ENCODE measurements at regions of chr14 and their contacts with region 1.

Region 1: DNA sequence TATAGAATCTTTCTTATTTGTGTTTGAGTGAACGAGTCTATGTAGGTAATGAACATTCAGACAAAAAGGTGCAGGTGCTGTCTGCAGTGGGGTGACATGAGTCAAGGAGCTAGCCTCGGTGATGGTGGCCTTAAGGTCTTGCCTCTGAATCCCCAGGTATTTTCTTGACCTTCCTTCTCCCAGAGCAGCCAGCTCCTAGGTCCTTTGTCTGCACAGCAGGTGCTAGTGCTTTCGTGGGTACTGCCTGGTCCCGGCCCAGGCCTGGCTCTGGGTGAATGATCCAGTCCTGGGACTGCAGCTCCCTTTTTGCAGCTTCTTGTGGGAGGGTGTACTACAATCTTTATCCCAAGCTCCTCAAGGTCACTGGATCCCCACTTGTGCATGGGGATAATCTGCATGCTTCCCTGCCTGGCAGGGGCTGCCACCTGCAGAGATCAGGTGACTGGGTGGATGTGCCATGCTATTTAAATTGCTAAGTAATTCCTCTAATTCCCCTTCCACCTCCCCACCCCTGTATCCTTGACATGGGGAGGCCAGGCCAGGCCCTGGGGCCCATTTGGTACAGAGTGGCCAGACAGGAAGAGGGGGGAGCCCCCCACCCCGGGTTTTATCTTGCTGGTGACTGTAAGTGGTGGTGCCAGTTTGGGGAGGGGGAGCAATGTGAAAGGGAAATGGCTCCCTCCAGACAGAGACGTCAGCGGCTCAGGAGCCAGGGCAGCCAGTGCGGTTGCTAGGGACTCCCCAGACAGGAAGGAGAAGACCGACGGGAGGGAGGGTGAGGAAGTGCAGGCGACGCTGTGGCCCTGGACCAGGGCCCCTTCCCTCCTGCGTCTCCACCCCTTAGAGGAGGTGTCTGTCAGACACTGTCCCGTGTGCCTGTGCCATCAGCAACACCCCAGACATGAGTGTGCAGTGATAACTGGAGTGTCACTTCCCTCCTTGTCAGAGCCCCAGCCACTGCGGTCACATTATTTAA is 6.7 kb downstream of the VASH1 start:
- DNase-seq: peak; percentile 46 to 85 (median 70)
- H3K4me3 ChIP-seq: peak overlapping the region; percentile 17
- H3K4me3 Mint-ChIP-seq: peak overlapping the region in 6 of 7 donors; percentile 35 to 85 (median 60)
- H3K27ac ChIP-seq: peak overlapping the region; percentile 47
- H3K27ac Mint-ChIP-seq: peak overlapping the region in 7 of 8 donors; percentile 34 to 94 (median 89)
- H3K4me1 ChIP-seq: peaks cover 19% of the 10 kb centered on the region
- H3K4me1 Mint-ChIP-seq: peaks cover 17 to 37% (median 28%) of the 10 kb centered on the region in 3 donors
- H3K27me3 ChIP-seq: no peaks in the 10 kb centered on the region
- H3K27me3 Mint-ChIP-seq: peaks cover 10 to 12% of the 10 kb centered on the region in 2 donors

Region 2: GRCh38 chr14:76615331-76615730 is 152.6 kb before region 1 on chr14:
- CTCF ChIA-PET with region 1: no interaction called
- POLR2A ChIA-PET with region 1: no interaction called
- DNase-seq: no peak
- H3K4me3 ChIP-seq: no peak overlapping the region
- H3K4me3 Mint-ChIP-seq: no peak overlapping the region
- H3K27ac ChIP-seq: no peak overlapping the region
- H3K27ac Mint-ChIP-seq: no peak overlapping the region
- H3K4me1 ChIP-seq: no peaks in the 10 kb centered on the region
- H3K4me1 Mint-ChIP-seq: no peaks in the 10 kb centered on the region
- H3K27me3 ChIP-seq: no peaks in the 10 kb centered on the region
- H3K27me3 Mint-ChIP-seq: peaks cover 4 to 15% of the 10 kb centered on the region in 2 donors

Region 3: GRCh38 chr14:76752744-76753143 is 15.2 kb before region 1 on chr14:
- CTCF ChIA-PET with region 1: no interaction called
- POLR2A ChIA-PET with region 1: no interaction called
- DNase-seq: no peak
- H3K4me3 ChIP-seq: no peak overlapping the region
- H3K4me3 Mint-ChIP-seq: no peak overlapping the region
- H3K27ac ChIP-seq: no peak overlapping the region
- H3K27ac Mint-ChIP-seq: no peak overlapping the region
- H3K4me1 ChIP-seq: no peaks in the 10 kb centered on the region
- H3K4me1 Mint-ChIP-seq: no peaks in the 10 kb centered on the region
- H3K27me3 ChIP-seq: no peaks in the 10 kb centered on the region
- H3K27me3 Mint-ChIP-seq: peaks cover 5 to 14% of the 10 kb centered on the region in 2 donors

Region 4: DNA sequence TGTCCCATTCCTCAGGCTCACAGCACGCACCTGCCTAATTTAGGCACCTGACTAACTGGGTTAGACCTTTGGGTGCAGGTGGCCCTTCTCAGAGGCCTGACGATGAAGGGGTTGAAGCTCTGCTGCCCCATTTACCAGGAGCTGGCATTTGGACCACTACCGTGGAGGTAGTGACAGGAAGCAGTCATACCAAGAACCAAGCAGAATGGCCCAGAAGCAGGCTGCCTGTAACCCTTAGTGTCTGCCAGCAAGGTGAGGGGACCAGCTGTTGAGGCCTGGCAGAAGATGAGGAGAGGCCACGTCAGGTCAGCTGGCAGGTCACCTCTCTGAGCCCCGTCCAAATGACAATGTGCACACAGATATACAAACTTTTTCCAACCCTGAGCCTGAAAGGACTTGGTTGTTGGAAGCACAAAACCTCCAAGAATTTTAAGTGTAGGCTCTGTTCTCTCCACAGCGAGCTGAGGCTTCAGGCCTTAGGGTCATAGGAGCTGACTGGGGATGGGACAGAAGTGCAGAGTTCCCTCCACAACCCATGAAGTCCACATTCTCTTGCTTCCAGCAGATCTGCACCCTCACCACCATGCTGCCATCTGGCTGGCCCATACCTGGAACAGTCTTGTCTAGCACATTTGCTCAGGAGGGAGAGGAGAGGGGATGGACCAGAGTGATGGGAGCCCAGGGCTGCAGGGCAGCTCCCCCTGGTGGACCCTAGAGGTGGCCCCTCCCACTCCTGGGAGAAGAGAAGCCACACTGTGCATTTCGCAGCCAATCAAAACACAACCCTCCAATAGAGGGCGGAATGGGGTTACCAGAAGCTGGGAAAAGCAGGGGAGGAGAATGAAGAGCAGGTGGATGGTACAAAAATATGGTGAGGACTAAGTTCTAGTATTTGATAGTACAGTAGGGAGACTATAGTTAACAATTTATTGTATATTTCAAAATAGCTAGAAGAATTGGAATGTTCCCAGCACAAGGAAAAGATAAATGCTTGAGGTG is 16.6 kb after region 1 on chr14:
- CTCF ChIA-PET with region 1: interaction called, 12 read pairs
- POLR2A ChIA-PET with region 1: interaction called, 3 read pairs
- DNase-seq: peak; percentile 17 to 68 (median 38)
- H3K4me3 ChIP-seq: no peak overlapping the region
- H3K4me3 Mint-ChIP-seq: peak overlapping the region in 1 of 7 donors; percentile 77
- H3K27ac ChIP-seq: no peak overlapping the region
- H3K27ac Mint-ChIP-seq: peak overlapping the region in 6 of 8 donors; percentile 47 to 80 (median 73)
- H3K4me1 ChIP-seq: peaks cover 9% of the 10 kb centered on the region
- H3K4me1 Mint-ChIP-seq: peaks cover 13 to 30% (median 21%) of the 10 kb centered on the region in 3 donors
- H3K27me3 ChIP-seq: no peaks in the 10 kb centered on the region
- H3K27me3 Mint-ChIP-seq: no peaks in the 10 kb centered on the region

Measured in CD8-positive, alpha-beta memory T cell (primary cell).